RWPE1 (cell line): ENCODE measurements at regions of chr19 and their contacts with region 1.

Region 1: DNA sequence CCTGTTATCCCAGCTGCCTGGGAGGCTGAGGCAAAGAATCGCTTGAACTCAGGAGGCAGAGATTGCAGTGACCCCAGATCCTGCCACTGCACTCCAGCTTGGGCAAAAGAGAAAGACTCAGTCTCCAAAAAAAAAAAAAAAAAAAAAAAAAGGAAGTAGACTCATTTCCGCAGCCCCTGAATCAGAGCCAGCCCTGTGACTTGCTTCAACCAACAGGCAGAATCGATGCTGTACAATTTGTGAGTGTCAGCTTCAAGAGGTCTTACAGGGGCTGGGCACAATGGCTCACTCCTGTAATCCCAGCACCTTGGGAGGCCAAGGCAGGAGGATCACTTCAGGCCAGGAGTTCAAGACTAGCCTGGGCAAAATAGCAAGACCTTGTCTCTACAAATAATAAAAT is 12.8 kb downstream of the ANKRD27 start:
- DNase-seq: no peak
- H3K27ac ChIP-seq: no peak overlapping the region
- CTCF ChIP-seq: no peak

Region 2: GRCh38 chr19:32674959-32675719 is 13.0 kb after region 1 on chr19 and contains the start of gene ANKRD27:
- CTCF ChIA-PET with region 1: interaction called, 3 read pairs
- POLR2A ChIA-PET with region 1: interaction called, 10 read pairs
- DNase-seq: peak; percentile 97
- H3K27ac ChIP-seq: peak within 1 kb of the TSS; percentile 84
- CTCF ChIP-seq: no peak